Left ventricle myocardium superior (tissue), 1 donor: ENCODE measurements at regions of chr5 and their contacts with region 1.

Region 1: GRCh38 chr5:67809589-67809988 is 406.0 kb upstream of the PIK3R1 start:
- DNase-seq: no peak
- ATAC-seq: no peak

Region 2: GRCh38 chr5:67133776-67134175 is 675.8 kb before region 1 on chr5:
- intact Hi-C with region 1: no loop called
- DNase-seq: no peak
- ATAC-seq: no peak

Region 3: DNA sequence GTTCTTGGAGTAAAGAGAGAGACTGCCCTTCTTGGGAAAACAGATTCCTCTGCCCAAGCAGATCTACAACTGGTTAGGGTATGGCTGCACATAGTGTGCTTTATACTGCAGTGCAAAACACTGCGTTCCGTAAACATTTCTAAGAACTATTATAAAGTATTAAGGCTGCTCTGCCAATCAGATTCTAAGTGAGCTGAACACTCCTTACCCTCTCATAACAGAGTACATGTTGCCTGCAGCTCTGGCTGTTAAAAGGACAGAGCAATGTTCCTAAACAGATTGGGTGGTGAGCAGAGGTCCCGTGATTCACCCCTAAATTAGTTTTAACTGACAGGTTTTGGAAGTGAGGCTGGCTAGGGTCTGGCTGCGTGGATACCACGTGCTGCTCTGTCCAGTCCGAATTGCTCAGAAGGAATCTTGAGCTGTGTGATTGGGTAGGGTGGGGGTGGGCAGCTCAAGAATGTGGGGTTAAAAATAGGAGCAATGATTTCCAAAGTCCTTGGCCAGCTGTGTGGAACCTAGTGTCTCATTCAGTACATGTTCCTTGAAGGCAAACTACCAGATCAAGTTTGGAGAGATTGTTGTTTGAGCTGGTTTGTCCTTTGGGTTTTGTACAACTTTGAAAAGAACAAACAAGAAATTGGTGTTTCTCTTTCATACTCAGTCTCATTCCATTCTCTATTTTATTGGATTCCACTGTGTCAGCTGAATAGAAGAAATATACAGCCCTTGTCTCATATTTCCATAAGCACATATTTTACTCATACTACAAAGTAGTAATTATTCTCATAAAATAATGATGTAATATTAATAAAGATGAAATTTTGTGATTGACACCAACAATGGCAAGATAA is 115.4 kb before region 1 on chr5:
- intact Hi-C with region 1: loop called (anchors 10 kb)
- DNase-seq: peak; percentile 76
- ATAC-seq: peak; percentile 96

Region 4: DNA sequence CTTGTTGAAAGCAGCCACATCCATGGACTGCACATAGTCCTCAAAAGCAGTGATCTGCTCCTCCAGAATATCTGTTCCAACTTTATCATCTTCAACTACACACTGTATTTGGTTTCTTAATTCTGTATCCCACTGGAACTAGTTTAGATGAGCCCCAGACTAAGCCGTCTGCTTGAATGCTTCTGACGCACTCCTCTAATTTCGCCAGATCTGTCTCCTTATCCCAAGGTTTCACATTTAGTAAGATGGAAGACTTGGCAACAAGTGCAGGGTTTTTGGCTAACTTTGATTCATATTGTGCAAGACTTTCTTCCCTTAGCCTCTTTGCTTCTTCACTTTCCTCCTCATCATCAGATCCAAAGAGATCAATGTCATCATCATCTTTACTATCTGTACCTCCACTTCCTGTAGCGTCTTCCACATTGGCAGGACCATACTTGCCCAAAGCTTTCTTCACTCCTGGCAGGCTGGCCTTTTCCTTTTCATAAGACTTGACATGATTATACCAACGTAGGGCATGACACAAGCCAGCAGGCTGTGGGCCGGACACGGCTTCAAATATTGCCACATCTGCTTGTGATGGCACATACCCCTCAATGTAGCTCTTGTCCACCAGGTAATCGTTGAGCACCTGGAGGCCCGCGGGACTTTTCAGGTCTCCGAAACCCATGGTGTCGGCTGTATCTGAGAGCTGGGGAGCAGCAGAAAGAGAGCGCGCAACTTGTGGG is 349.8 kb after region 1 on chr5:
- intact Hi-C with region 1: no loop called
- DNase-seq: no peak
- ATAC-seq: peak; percentile 89